ENCODE measurements at regions of chr1 and their contacts with region 1.

Region 1: GRCh38 chr1:34742667-34743270 is 12.1 kb upstream of the GJB5 start:
- DNase-seq: peak; percentile 86
- H3K4me3 Mint-ChIP-seq: no peak overlapping the region
- H3K27ac Mint-ChIP-seq: no peak overlapping the region
- H3K4me1 Mint-ChIP-seq: no peaks in the 10 kb centered on the region
- H3K27me3 Mint-ChIP-seq: no peaks in the 10 kb centered on the region

Region 2: GRCh38 chr1:34268311-34268954 is 474.3 kb before region 1 on chr1:
- CTCF ChIA-PET with region 1: no interaction called
- intact Hi-C with region 1: no loop called
- DNase-seq: no peak
- H3K4me3 Mint-ChIP-seq: no peak overlapping the region
- H3K27ac Mint-ChIP-seq: no peak overlapping the region
- H3K4me1 Mint-ChIP-seq: no peaks in the 10 kb centered on the region
- H3K27me3 Mint-ChIP-seq: peaks cover 21% of the 10 kb centered on the region

Region 3: GRCh38 chr1:34656731-34657130 is 86.0 kb before region 1 on chr1:
- CTCF ChIA-PET with region 1: no interaction called
- intact Hi-C with region 1: no loop called
- DNase-seq: no peak
- H3K4me3 Mint-ChIP-seq: no peak overlapping the region
- H3K27ac Mint-ChIP-seq: no peak overlapping the region
- H3K4me1 Mint-ChIP-seq: no peaks in the 10 kb centered on the region
- H3K27me3 Mint-ChIP-seq: peaks cover 8% of the 10 kb centered on the region

Region 4: GRCh38 chr1:34753163-34753562 is 10.4 kb after region 1 on chr1:
- CTCF ChIA-PET with region 1: interaction called, 10 read pairs
- intact Hi-C with region 1: no loop called
- DNase-seq: no peak
- H3K4me3 Mint-ChIP-seq: no peak overlapping the region
- H3K27ac Mint-ChIP-seq: no peak overlapping the region
- H3K4me1 Mint-ChIP-seq: no peaks in the 10 kb centered on the region
- H3K27me3 Mint-ChIP-seq: no peaks in the 10 kb centered on the region